ENCODE measurements at regions of chr1 and their contacts with region 1.

Region 1: GRCh38 chr1:150168960-150169601 is 19.4 kb downstream of the PLEKHO1 start:
- DNase-seq: peak; percentile 78
- ATAC-seq: peak; percentile 53 to 72

Region 2: DNA sequence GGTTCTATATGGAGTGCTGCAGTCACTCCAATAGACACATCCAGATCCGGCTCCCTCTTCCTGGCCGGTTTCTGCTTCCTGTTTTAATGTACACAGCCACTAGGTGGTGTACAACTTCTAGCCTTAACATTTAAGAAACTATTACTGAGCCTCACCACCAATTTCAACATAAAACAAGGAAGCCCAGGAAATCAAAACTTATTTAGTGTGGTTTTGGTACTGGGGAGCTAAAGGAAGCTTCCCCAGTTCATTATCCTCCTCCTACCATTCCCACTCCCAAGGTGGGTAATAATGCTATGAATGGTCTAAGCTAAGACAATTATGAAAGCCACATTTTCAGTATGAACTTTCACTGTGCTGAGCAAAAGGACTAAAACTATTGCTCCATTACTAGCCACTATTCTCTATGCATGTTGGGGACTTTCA is 206.9 kb before region 1 on chr1:
- intact Hi-C with region 1: loop called (anchors 2 to 5 kb)
- DNase-seq: peak; percentile 39
- ATAC-seq: peak; percentile 76 to 88

Region 3: DNA sequence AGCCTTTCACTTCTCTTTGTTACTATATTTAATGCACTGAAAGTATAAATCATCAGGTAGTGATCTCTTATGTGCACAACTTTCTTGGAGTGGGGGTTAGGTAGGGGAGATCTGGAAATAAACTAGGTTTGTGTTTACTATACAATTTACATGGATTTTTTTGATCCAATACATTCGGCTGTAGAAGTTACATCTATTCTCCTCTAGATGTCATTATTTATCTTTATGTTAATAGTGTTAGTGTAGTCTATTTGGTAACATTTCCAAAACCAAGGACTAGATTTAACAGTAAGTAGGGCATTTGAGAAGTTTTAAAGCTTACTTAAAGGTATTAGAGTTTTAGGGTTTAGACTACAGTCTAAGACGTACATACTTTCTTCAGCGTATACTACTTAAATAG is 96.1 kb before region 1 on chr1:
- intact Hi-C with region 1: loop called (anchors 5 kb)
- DNase-seq: no peak
- ATAC-seq: peak; percentile 41 to 59

Region 4: GRCh38 chr1:150118716-150119115 is 50.4 kb before region 1 on chr1:
- intact Hi-C with region 1: no loop called
- DNase-seq: no peak
- ATAC-seq: no peak

Region 5: DNA sequence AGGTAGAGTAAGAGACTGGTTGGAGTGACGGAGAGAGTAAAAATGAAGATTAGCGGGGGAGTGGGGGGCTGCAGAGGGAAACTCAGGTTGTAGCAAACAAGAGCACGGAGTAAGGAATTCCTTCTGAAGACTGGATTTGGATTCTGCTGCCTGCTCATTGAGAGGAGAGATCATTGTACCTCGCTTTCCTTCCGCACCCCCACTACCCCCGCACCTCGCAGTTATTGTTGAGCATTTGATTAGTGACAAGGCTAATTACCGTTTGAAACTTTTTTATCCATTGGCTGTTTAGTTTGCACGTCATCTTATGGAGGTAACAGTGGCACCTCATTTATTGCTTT is 152.7 kb after region 1 on chr1:
- intact Hi-C with region 1: no loop called
- DNase-seq: no peak
- ATAC-seq: no peak

Region 6: DNA sequence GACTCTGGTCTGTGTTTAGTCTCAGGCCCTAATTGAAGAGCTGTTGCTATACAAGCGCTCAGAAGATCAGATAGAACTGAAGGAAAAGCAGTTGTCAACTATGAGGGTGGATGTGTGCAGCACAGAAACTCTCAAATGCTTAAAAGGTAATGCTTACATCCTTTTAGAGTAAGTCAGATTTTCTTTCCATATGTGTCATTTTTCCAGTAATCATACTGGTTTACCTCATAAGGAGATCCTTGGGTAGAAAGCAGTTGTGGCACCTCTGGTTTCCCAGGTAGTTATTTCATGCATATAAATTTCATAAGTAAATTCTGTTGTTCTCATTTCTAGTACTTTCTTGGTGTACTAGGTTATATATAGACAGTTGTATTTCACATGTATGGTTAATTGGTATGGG is 275.2 kb after region 1 on chr1:
- intact Hi-C with region 1: no loop called
- DNase-seq: no peak
- ATAC-seq: no peak

Measured in left cardiac atrium (tissue), 4 donors.